ENCODE measurements at regions of chr18 and their contacts with region 1.

Region 1: DNA sequence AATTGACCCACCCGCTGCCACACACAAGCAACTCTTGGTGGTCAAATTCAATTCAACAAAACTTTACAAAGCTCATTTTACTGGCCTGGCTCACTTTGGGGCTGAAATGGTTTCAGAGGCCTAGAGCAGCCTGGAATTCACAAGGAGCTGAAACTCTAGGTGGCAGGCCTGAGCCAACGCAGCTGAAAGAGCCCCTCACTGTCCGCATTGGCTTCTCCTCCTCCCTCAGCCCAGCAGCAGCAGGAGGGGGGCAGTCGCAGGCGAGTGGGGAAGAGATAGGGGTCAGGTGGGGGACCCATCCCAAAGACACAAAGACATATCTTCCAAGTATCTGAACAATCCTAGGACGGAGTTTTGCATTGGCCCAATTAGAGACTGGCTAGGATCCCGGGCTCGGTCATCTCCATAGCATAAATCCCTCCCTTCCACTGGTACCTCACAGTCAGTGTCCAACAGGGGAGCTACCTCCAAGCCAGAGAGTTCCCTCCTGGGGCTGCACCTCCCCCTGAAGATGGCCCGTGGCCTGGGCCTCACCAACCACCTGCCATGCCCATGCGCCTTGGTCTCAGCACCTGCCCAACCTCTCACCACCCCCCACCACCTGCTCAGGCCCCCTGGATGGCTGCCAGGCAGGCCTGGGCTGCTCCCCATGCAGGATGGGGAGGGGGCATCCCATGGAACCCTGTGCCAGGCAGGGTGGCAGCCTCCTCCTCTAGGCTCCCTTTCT is 113.4 kb downstream of the ZBTB7C start:
- DNase-seq: peak in 1 of 2 experiments; percentile 64
- H3K4me3 ChIP-seq: no peak overlapping the region
- H3K27ac ChIP-seq: no peak overlapping the region
- H3K4me1 ChIP-seq: peaks cover 0 to 11% (median 6%) of the 10 kb centered on the region in 4 experiments; a peak in 5 of 7 replicates
- H3K27me3 ChIP-seq: no peaks in the 10 kb centered on the region
- CTCF ChIP-seq: peak; percentile 70 to 80 (median 76)
- EP300 ChIP-seq: no peak
- POLR2A ChIP-seq: no peak
- RAD21 ChIP-seq: peak; percentile 67 to 75

Region 2: DNA sequence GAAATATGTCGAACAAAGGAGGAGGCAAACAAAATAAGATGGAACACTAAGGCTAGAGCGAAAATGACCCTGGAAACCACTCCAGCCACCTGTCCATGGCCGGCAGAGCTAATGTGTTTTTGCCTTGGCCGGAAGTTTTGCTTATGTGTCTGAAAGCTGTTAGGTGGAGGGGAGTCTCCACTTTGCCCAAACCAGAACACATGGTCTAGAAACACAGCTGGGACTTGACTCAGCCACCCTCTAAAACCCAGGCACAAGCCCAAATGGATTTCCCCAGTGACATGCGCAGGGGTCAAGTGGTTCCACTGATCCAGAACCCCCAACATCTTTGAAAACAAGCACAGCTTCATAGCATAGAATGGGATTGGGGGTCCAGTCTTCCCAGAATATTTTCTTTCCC is 45.9 kb before region 1 on chr18:
- CTCF ChIA-PET with region 1: no interaction called
- POLR2A ChIA-PET with region 1: no interaction called
- DNase-seq: no peak
- H3K4me3 ChIP-seq: no peak overlapping the region
- H3K27ac ChIP-seq: no peak overlapping the region
- H3K4me1 ChIP-seq: no peaks in the 10 kb centered on the region
- H3K27me3 ChIP-seq: no peaks in the 10 kb centered on the region
- CTCF ChIP-seq: no peak
- EP300 ChIP-seq: no peak
- POLR2A ChIP-seq: no peak
- RAD21 ChIP-seq: no peak

Region 3: DNA sequence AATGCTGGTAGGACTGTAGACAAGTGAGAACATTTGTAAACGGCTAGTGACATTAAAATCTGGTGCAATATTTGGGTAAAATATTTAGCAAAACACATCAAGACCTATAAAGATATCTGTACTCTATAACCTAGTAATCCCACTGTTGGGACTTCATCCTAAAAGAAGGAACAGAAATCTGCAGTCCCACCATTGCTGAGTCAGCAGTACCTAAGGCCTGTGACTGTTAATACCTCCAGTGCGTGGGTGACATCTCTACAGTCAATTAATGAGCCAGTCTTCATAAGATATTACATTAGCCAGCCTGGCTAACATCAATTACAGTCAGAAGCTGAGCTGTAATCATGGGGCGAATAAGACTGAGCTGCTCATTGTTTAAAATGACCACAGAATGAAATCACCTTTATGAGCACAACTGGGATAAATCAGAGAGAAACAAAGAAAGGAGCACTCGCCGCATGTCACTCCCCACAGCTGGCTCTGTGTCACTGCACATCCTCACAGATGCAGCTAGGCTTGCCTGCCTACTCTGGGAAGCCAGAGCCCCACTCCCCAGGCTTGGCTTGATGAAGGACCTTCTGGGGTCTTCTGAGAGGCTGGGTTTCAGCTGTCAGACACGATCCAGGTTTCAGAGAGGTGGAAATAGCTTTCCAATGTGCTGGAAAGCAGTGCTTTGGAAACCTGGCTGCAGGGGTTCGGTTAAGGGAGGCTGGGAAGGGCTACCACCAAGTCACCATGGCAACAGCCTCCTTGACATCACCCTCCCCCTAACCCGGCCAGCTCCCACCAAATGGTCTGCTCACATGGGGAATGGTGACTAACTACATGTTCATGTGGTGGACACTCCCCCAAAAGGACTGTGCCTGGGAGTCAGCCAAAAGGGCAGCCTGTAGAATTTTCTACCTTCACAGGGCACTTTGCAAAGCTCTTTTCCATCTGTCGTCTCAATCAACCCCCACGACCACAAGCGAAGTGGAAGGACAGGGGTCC is 31.5 kb before region 1 on chr18:
- CTCF ChIA-PET with region 1: interaction called, 21 read pairs
- POLR2A ChIA-PET with region 1: no interaction called
- DNase-seq: no peak
- H3K4me3 ChIP-seq: no peak overlapping the region
- H3K27ac ChIP-seq: no peak overlapping the region
- H3K4me1 ChIP-seq: no peaks in the 10 kb centered on the region
- H3K27me3 ChIP-seq: no peaks in the 10 kb centered on the region
- CTCF ChIP-seq: no peak
- EP300 ChIP-seq: no peak
- POLR2A ChIP-seq: no peak
- RAD21 ChIP-seq: no peak

Region 4: DNA sequence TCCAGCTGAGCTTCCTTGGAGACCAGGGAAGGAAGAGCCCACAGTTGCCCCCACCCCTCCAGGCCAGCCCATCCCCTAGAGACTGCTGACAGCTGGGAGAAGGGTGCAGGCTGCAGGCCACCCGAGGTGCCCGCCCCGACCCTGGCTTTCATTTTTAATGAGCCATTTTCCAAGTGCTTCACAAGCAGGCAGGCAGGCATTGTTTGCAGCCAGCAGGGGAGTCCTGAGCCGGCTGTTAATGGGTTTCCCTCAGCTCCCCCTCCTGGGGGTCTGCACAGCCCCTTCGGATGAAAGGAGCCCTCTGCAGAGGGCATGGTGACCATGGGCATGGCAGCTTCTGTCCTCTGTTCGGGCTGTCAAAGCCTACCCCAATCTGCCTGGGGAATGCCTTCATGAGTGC is 18.9 kb after region 1 on chr18:
- CTCF ChIA-PET with region 1: interaction called, 14 read pairs
- POLR2A ChIA-PET with region 1: no interaction called
- DNase-seq: no peak
- H3K4me3 ChIP-seq: no peak overlapping the region
- H3K27ac ChIP-seq: no peak overlapping the region
- H3K4me1 ChIP-seq: peaks cover 0 to 10% (median 7%) of the 10 kb centered on the region in 4 experiments; a peak in 5 of 7 replicates
- H3K27me3 ChIP-seq: no peaks in the 10 kb centered on the region
- CTCF ChIP-seq: peak in 1 of 3 experiments; percentile 21; a peak in 1 of 4 replicates
- EP300 ChIP-seq: no peak
- POLR2A ChIP-seq: no peak
- RAD21 ChIP-seq: no peak

Region 5: DNA sequence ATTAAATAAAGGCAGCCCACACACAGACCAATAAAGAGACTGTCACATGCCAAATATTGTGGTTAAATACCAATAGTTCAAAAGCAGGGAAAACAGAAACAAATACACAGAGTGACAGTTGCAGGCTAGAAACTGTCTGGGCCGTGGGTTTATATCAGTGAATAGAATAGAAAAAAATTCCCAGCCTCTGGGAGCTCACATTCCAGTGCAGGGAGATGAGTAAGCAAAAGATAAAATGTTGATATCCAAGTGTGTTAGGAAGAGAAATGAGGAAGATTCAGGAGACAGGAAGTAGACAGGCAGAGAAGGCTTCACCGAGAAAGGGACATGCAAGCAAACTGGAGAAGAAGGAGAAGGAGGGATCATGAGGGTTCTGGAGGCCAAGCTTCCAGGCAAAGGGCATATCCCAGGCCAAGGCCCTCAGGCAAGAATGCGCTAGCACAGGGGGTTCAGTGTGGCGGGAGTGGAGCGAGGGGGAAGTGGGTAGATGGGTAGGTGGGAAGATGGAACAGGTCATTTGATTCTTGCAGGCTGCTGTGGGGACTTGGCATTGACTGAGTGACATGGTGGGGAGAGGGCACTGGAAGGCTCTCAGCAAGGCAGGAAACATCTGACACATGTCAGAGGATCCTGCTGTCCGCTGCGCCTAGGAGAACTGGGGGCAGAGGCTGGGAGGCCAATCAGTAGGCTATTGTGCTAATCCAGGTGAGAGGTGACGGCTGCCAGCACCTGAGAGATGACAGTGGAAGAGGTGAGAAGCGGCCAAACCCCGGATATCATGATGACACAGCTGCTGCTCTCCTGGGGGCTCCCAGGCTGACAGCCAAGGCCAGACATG is 24.3 kb after region 1 on chr18:
- CTCF ChIA-PET with region 1: interaction called, 14 read pairs
- POLR2A ChIA-PET with region 1: no interaction called
- DNase-seq: no peak
- H3K4me3 ChIP-seq: no peak overlapping the region
- H3K27ac ChIP-seq: no peak overlapping the region
- H3K4me1 ChIP-seq: peaks cover 0 to 2% (median under 1%) of the 10 kb centered on the region in 4 experiments; a peak in 2 of 7 replicates
- H3K27me3 ChIP-seq: no peaks in the 10 kb centered on the region
- CTCF ChIP-seq: no peak
- EP300 ChIP-seq: no peak
- POLR2A ChIP-seq: no peak
- RAD21 ChIP-seq: no peak

Region 6: DNA sequence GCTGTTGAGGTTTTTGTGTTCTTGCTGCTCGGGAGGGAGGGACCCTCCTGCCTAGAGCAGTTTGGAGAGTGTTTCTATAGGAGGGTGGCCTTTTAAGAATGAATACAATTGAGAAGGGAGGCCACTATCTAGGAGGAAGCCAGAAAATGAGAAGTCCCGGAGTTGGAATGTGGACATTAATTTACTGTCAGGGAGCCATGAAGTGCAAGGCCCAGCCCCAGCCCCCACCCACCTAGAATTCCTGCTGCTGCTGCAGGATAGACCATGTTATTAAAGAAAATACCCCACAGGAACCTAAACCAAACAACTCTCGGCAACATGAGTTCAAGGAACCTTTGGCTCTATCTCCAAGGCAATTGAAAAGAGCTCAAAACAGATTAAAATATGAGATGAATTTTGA is 67.4 kb after region 1 on chr18:
- CTCF ChIA-PET with region 1: interaction called, 10 read pairs
- POLR2A ChIA-PET with region 1: no interaction called
- DNase-seq: no peak
- H3K4me3 ChIP-seq: no peak overlapping the region
- H3K27ac ChIP-seq: no peak overlapping the region
- H3K4me1 ChIP-seq: peaks cover 0 to 5% (median under 1%) of the 10 kb centered on the region in 4 experiments; a peak in 5 of 7 replicates
- H3K27me3 ChIP-seq: no peaks in the 10 kb centered on the region; a peak in 1 of 7 replicates
- CTCF ChIP-seq: no peak
- EP300 ChIP-seq: no peak
- POLR2A ChIP-seq: no peak
- RAD21 ChIP-seq: no peak

Region 7: DNA sequence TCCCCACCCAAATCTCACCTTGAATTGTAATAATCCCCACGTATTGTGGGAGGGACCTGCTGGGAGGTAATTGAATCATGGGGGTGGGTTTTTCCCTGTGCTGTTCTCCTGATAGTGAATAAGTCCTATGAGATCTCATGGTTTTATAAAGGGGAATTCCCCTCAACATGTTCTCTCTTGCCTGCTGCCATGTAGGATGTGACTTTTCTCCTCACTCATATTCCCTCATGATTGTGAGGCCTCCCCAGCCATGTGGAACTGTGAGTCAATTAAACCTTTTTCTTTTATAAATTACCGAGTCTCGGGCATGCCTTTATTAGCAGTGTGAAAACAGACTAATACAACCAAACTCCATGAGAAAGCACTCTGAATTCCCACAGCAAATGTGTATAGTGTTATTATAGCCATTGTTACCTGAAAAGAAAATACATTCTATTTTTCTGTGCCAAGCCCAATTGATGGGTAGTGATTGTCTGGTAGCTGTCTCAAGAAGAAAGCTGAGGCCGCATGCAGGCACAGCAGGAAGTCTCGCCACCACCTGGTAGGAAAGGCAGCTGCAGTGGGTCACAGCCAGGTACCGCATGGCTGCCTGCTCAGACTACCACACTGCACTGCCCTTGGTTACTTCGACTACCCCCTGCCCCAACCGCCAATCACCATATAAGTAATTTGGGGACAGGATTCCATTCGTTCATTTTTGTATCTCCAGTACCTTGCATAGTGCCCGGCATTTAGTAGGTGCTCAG is 123.7 kb after region 1 on chr18:
- CTCF ChIA-PET with region 1: interaction called, 12 read pairs
- POLR2A ChIA-PET with region 1: no interaction called
- DNase-seq: no peak
- H3K4me3 ChIP-seq: no peak overlapping the region
- H3K27ac ChIP-seq: no peak overlapping the region
- H3K4me1 ChIP-seq: no peaks in the 10 kb centered on the region; a peak in 1 of 7 replicates
- H3K27me3 ChIP-seq: peaks cover 1 to 11% (median 4%) of the 10 kb centered on the region in 4 experiments; a peak in 4 of 7 replicates
- CTCF ChIP-seq: peak; percentile 43 to 68 (median 57)
- EP300 ChIP-seq: no peak
- POLR2A ChIP-seq: no peak
- RAD21 ChIP-seq: peak in 1 of 2 experiments; percentile 37; a peak in 1 of 4 replicates

Measured in H1 (cell line).